SK-N-SH (cell line): ENCODE measurements at regions of chr11 and their contacts with region 1.

Region 1: GRCh38 chr11:12281571-12282478 is 95.5 kb upstream of the PARVA start:
- DNase-seq: peak; percentile 89
- H3K4me3 ChIP-seq: no peak overlapping the region
- H3K27ac ChIP-seq: peak overlapping the region in 1 of 2 experiments; percentile 100; a peak in 2 of 4 replicates
- H3K4me1 ChIP-seq: peaks cover 14 to 36% of the 10 kb centered on the region in 2 experiments
- H3K27me3 ChIP-seq: no peaks in the 10 kb centered on the region
- CTCF ChIP-seq: peak; percentile 96
- EP300 ChIP-seq: no peak
- RAD21 ChIP-seq: peak; percentile 100

Region 2: DNA sequence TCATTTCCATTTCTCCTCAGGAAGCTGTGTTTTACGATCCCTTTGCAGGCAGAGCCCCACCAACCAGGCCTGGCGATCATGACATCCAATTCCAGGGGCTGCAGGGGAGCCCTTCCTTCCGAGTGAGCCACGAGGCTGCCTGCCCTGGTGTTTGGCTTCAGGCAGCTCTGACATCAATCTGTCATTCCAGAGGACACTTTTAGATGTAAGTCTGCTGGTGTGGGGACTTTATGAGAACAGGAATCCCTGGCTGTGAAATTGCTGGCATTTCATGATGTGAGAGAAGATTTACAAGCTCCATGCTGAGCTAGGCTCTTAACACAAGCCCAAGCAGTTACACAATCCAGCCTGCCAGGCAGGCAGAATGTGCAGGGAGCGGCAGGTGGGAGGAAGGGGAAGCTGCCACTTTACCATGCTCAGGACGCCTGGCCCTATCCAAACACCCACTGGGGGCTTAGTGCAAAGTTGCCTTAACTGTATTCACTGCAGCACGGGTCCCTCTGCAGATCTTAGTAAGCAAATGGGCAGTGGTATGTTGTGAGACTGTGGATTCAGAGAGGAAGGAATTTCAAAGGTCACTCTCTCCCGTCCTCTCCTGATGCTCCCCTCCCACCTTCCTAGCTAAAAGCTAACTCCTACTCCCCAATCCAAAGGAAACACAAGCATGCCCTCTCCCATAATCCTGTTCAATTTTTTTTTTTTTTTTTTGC is 214.9 kb before region 1 on chr11:
- CTCF ChIA-PET with region 1: interaction called, 39 read pairs
- POLR2A ChIA-PET with region 1: no interaction called
- DNase-seq: no peak
- H3K4me3 ChIP-seq: no peak overlapping the region
- H3K27ac ChIP-seq: peak overlapping the region; percentile 3 to 86; a peak in 3 of 4 replicates
- H3K4me1 ChIP-seq: peaks cover 5 to 20% of the 10 kb centered on the region in 2 experiments; a peak in 3 of 4 replicates
- H3K27me3 ChIP-seq: no peaks in the 10 kb centered on the region
- CTCF ChIP-seq: no peak
- EP300 ChIP-seq: no peak
- RAD21 ChIP-seq: no peak

Region 3: DNA sequence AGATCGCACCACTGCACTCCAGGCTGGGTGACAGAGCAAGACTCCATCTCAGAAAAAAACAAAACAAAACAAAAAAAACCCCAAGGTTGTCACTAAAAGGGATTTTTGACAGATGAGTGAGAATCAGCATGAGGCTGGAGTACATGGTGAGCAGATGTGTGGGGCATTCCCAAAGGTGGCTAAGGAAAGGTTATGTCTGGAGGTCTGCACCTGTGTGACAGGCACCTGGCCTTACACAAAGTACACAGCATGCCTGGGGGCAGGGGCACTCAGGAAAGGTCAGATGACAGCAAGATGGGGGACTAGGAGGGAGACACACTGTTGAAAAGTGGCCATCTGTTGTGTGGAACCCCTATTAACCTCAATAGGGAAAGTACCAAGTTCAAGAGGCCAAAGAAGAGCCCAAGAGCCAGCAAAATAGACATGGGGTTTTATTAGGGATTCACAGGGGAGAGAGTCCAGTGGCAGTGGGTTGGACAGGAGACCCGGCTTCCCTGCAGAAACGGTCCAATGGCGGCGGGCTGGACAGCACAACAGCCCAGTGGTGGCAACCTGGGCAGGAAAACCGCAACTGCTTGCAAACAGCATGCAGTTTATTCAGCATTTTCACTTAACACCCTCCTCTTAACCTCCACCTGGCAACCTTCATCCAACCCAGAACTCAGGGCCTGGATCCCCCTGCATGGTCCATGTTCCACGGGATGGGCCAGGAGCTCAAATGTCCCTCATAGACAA is 70.3 kb before region 1 on chr11:
- CTCF ChIA-PET with region 1: no interaction called
- POLR2A ChIA-PET with region 1: no interaction called
- DNase-seq: no peak
- H3K4me3 ChIP-seq: no peak overlapping the region
- H3K27ac ChIP-seq: peak overlapping the region in 1 of 2 experiments; percentile 59; a peak in 1 of 4 replicates
- H3K4me1 ChIP-seq: peaks cover 5 to 7% of the 10 kb centered on the region in 2 experiments; a peak in 3 of 4 replicates
- H3K27me3 ChIP-seq: no peaks in the 10 kb centered on the region
- CTCF ChIP-seq: no peak
- EP300 ChIP-seq: no peak
- RAD21 ChIP-seq: no peak

Region 4: GRCh38 chr11:12235947-12236743 is 45.7 kb before region 1 on chr11:
- CTCF ChIA-PET with region 1: interaction called, 34 read pairs
- POLR2A ChIA-PET with region 1: no interaction called
- DNase-seq: peak; percentile 55
- H3K4me3 ChIP-seq: no peak overlapping the region; a peak in 1 of 4 replicates
- H3K27ac ChIP-seq: peak overlapping the region in 1 of 2 experiments; percentile 97; a peak in 2 of 4 replicates
- H3K4me1 ChIP-seq: peaks cover 0 to 23% of the 10 kb centered on the region in 2 experiments; a peak in 3 of 4 replicates
- H3K27me3 ChIP-seq: no peaks in the 10 kb centered on the region
- CTCF ChIP-seq: peak; percentile 72
- EP300 ChIP-seq: no peak
- RAD21 ChIP-seq: peak; percentile 71

Region 5: DNA sequence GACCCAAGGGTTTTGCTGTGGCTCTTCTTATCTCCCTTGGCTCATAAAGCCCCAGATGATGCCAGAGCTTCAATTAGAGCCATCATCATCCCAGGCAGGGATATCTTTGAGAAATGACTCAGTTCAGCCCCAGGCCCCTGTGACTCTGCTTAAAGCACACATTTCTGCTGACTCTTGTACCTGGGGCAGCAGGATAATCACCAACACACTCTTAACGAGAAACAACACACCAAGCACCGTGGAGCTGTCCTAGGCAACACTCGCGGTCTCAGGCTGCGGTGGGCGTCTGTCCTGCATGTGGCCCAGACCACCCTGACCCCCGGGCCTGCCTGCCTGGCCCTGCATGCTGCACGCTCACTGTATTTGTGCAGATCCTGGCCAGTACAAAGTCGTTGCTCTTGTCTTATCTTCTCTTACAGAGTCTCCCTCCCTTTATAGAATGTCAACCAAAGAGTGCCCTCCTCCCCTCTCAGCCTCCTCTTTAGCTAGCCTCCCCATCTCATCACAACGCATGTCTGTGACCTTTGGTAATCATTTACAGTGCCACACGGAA is 18.6 kb before region 1 on chr11:
- CTCF ChIA-PET with region 1: interaction called, 57 read pairs
- POLR2A ChIA-PET with region 1: no interaction called
- DNase-seq: peak; percentile 66
- H3K4me3 ChIP-seq: no peak overlapping the region
- H3K27ac ChIP-seq: peak overlapping the region in 1 of 2 experiments; percentile 43; a peak in 1 of 4 replicates
- H3K4me1 ChIP-seq: peaks cover 0 to 20% of the 10 kb centered on the region in 2 experiments; a peak in 2 of 4 replicates
- H3K27me3 ChIP-seq: no peaks in the 10 kb centered on the region
- CTCF ChIP-seq: no peak
- EP300 ChIP-seq: no peak
- RAD21 ChIP-seq: no peak

Region 6: DNA sequence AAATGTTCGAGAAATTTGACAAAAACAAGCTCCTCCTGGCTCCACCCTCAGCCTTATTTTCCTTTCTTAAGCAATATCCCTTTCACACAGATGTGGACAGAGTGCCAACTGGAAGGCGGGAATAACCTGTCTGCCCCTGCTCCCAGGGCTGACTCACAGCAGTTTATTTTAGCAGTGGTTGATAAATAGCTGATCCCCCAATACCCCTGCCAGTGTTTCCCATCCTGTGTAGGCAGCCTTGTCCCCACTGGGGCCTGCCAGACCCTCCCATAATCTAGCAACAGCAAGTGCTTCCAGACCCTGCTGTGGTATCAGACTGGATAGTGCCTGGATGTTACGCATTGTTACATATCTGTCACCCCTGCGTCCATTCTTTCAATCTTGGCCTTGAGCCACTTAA is 149.1 kb after region 1 on chr11:
- CTCF ChIA-PET with region 1: no interaction called
- POLR2A ChIA-PET with region 1: no interaction called
- DNase-seq: no peak
- H3K4me3 ChIP-seq: no peak overlapping the region
- H3K27ac ChIP-seq: no peak overlapping the region
- H3K4me1 ChIP-seq: peaks cover 24 to 40% of the 10 kb centered on the region in 2 experiments
- H3K27me3 ChIP-seq: no peaks in the 10 kb centered on the region
- CTCF ChIP-seq: no peak
- EP300 ChIP-seq: no peak
- RAD21 ChIP-seq: no peak

Region 7: DNA sequence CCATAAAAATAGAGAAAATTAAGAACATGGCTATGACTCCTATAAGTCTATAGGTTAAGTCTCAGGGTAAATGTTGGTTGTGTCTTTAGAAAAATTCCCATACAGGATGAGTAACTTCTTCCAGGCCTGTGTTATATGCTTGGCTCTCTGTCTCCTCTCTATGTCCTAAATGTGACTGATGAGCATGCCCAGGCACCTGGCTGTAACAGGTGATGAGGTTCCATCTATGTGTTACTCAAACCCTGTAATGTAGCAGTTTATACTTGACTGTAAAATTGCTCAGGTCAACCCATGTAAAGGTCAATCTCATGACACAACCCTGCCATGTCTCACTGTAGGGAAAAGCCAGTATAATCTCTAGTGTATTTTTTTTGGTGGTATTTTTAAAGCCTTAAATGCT is 165.0 kb after region 1 on chr11:
- CTCF ChIA-PET with region 1: no interaction called
- POLR2A ChIA-PET with region 1: no interaction called
- DNase-seq: no peak
- H3K4me3 ChIP-seq: no peak overlapping the region
- H3K27ac ChIP-seq: no peak overlapping the region
- H3K4me1 ChIP-seq: peaks cover 3 to 14% of the 10 kb centered on the region in 2 experiments; a peak in 3 of 4 replicates
- H3K27me3 ChIP-seq: no peaks in the 10 kb centered on the region
- CTCF ChIP-seq: no peak
- EP300 ChIP-seq: no peak
- RAD21 ChIP-seq: no peak